K562 (cell line): ENCODE measurements at regions of chr1 and their contacts with region 1.

Region 1: DNA sequence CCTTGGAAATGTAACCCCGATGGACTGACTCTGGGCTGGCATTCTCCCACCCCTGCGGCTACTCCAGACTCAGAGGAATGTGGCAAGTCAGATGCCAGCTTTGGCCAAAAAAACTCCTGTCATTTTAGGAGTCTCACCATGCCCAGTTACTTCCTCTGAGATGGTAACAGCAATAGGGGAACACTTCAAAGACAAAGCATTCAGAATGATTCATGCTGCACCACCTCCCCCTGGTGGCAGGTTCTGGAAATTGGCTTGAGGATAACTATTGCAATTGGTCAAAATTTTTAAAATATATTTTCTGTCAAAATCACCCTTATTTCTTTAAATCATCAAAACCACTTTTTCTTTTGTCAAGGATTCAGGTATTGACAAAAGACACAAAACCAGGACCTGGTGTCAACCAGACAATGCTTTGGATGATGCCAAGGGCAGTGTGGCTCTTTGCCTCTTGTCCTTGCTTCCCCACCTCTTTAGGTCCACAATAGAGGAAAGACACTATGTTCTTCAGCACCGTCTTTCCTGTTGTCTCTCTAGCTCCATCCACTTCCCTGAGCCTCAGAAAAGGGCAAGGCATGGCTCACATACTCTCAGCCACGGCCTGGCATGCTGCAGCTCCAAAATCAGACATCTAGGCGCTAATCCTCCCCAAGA is 9.9 kb upstream of the CDCA8 start:
- DNase-seq: peak; percentile 68 to 80 (median 69)
- ATAC-seq: peak; percentile 88
- H3K4me3 ChIP-seq: no peak overlapping the region
- H3K27ac ChIP-seq: no peak overlapping the region
- H3K4me1 ChIP-seq: no peaks in the 10 kb centered on the region
- H3K27me3 ChIP-seq: peaks cover 4 to 5% of the 10 kb centered on the region in 2 experiments; a peak in 3 of 5 replicates
- CTCF ChIP-seq: peak; percentile 80 to 97 (median 91)
- EP300 ChIP-seq: no peak
- POLR2A ChIP-seq: no peak
- RAD21 ChIP-seq: peak; percentile 85 to 91

Region 2: DNA sequence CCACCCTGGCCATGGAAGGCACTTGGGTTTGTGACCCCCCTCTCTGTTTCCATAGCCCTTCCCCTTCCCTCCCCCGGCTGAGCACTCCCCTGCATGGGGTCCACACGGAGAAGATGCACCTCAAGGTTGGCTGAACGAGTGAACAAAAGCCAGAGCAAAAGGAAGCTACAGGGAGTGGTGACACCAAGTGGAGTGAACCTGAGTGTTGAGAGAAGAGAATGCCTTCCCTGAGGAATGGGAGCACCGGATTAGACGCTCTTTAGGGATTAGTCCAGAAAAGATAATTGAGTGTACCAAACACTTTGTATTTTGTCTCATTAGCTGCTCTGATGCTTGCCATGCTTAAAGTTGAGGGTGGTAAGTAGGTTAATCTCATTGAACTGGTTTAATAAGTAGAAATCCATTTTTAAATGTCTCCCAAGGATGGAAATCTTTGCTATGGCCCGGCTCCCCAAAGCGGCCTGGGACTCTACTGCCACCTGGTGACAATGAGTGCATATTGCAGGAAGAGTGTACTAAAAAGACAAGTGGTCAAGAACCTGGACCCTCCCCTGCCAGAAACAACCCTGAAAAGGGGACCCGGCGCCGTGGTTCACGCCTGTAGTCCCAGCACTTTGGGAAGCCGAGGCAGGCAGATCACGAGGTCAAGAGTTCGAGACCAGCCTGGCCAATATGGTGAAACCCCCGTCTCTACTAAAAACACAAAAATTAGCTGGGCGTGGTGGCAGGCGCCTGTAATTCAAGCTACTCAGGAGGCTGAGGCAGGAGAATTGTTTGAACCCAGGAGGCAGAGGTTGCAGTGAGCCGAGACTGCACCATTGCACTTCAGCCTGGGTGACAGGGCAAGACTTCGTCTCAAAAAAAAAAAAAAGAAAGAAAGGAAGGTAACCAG is 358.7 kb before region 1 on chr1:
- CTCF ChIA-PET with region 1: no interaction called
- POLR2A ChIA-PET with region 1: no interaction called
- in situ Hi-C with region 1: no loop called
- intact Hi-C with region 1: no loop called
- DNase-seq: peak; percentile 67 to 88 (median 86)
- ATAC-seq: peak; percentile 72
- H3K4me3 ChIP-seq: no peak overlapping the region
- H3K27ac ChIP-seq: no peak overlapping the region
- H3K4me1 ChIP-seq: no peaks in the 10 kb centered on the region
- H3K27me3 ChIP-seq: peaks cover 4 to 8% of the 10 kb centered on the region in 2 experiments; a peak in 3 of 5 replicates
- CTCF ChIP-seq: peak; percentile 82 to 87 (median 86)
- EP300 ChIP-seq: no peak
- POLR2A ChIP-seq: no peak
- RAD21 ChIP-seq: peak; percentile 69 to 91

Region 3: DNA sequence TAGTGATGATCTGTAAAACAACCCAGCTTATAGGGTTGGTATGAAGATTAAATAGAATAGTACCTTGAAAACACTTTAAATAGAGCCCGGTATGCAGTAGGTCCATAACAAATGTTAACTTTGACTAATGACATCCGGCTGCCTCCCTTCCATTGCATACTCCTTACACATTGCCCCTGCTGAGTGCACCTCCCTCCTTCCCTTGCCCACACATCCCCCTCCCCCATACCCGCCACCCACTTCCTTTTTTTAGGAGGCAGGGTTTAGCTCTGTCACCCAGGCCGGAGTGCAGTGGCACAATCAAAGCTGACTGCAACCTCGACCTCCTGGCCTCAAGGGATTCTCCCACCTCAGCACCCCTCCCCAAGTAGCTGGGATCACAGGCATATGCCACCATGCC is 232.5 kb before region 1 on chr1:
- CTCF ChIA-PET with region 1: interaction called, 53 read pairs
- POLR2A ChIA-PET with region 1: interaction called, 5 read pairs
- in situ Hi-C with region 1: loop called (anchors 5 kb)
- intact Hi-C with region 1: loop called (anchors 1 kb)
- DNase-seq: no peak
- ATAC-seq: no peak
- H3K4me3 ChIP-seq: no peak overlapping the region
- H3K27ac ChIP-seq: no peak overlapping the region
- H3K4me1 ChIP-seq: peaks cover under 1 to 2% of the 10 kb centered on the region in 2 experiments; a peak in 4 of 5 replicates
- H3K27me3 ChIP-seq: peaks cover 18 to 58% of the 10 kb centered on the region in 2 experiments; a peak in 3 of 5 replicates
- CTCF ChIP-seq: no peak
- EP300 ChIP-seq: no peak
- POLR2A ChIP-seq: no peak
- RAD21 ChIP-seq: no peak

Region 4: GRCh38 chr1:37458528-37458927 is 223.9 kb before region 1 on chr1:
- CTCF ChIA-PET with region 1: interaction called, 53 read pairs
- POLR2A ChIA-PET with region 1: interaction called, 5 read pairs
- in situ Hi-C with region 1: loop called (anchors 5 kb)
- intact Hi-C with region 1: loop called (anchors 1 kb)
- DNase-seq: peak in 1 of 4 experiments; percentile 34
- ATAC-seq: peak; percentile 42
- H3K4me3 ChIP-seq: no peak overlapping the region
- H3K27ac ChIP-seq: no peak overlapping the region
- H3K4me1 ChIP-seq: peaks cover 5 to 7% of the 10 kb centered on the region in 2 experiments; a peak in 4 of 5 replicates
- H3K27me3 ChIP-seq: peaks cover 5 to 16% of the 10 kb centered on the region in 2 experiments; a peak in 4 of 5 replicates
- CTCF ChIP-seq: peak; percentile 23 to 51 (median 43); a peak in 5 of 6 replicates
- EP300 ChIP-seq: no peak
- POLR2A ChIP-seq: no peak
- RAD21 ChIP-seq: peak in 1 of 2 experiments; percentile 47; a peak in 2 of 4 replicates

Region 5: DNA sequence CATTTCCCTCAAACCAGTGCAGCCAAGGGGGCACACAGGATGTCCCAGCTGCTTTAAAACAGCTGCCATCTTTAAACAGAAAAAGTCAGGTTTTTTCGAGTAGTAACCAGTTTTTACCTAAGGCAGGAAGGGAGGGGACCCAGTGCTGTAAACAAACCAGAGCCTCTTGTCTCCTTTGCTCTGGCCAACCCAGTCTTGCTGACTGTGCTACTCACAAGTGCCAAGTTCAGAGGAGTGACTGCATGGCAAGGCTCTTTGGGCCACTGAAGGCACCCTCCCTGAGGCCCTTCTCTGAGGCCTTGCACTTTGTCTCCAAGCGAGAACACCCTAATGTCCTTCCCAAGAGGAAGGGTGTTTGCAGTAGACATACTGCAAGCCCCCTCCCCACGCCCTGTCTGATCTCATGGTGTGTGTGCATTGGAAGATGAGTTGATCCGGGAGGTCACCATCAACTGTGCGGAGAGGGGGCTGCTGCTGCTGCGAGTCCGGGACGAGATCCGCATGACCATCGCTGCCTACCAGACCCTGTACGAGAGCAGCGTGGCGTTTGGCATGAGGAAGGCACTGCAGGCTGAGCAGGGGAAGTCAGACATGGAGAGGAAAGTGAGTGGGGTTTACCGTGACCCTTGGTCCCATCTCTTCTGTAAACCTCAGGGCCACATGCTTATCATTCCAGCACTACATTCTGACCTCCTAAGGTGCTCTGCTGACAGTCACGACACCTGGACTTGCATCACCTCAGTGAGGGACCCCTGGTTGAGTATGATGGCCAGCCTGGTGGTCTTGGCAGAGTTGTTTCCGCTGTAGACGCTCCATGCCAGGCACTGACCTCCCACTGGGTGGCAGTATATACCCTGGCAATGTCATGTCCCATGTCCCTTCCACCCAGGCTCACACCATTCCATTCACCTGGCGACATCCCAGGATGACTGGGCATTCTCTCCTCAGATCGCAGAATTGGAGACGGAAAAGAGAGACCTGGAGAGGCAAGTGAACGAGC is 121.0 kb before region 1 on chr1:
- CTCF ChIA-PET with region 1: interaction called, 3 read pairs
- POLR2A ChIA-PET with region 1: interaction called, 3 read pairs
- in situ Hi-C with region 1: no loop called
- intact Hi-C with region 1: loop called (anchors 5 kb)
- DNase-seq: peak; percentile 56 to 66 (median 61)
- ATAC-seq: peak; percentile 70
- H3K4me3 ChIP-seq: no peak overlapping the region
- H3K27ac ChIP-seq: no peak overlapping the region; the same call in 2 of the 3 replicates
- H3K4me1 ChIP-seq: peaks cover 60 to 61% of the 10 kb centered on the region in 2 experiments
- H3K27me3 ChIP-seq: no peaks in the 10 kb centered on the region
- CTCF ChIP-seq: peak; percentile 68 to 89 (median 76)
- EP300 ChIP-seq: no peak
- POLR2A ChIP-seq: no peak
- RAD21 ChIP-seq: peak; percentile 27 to 72

Region 6: DNA sequence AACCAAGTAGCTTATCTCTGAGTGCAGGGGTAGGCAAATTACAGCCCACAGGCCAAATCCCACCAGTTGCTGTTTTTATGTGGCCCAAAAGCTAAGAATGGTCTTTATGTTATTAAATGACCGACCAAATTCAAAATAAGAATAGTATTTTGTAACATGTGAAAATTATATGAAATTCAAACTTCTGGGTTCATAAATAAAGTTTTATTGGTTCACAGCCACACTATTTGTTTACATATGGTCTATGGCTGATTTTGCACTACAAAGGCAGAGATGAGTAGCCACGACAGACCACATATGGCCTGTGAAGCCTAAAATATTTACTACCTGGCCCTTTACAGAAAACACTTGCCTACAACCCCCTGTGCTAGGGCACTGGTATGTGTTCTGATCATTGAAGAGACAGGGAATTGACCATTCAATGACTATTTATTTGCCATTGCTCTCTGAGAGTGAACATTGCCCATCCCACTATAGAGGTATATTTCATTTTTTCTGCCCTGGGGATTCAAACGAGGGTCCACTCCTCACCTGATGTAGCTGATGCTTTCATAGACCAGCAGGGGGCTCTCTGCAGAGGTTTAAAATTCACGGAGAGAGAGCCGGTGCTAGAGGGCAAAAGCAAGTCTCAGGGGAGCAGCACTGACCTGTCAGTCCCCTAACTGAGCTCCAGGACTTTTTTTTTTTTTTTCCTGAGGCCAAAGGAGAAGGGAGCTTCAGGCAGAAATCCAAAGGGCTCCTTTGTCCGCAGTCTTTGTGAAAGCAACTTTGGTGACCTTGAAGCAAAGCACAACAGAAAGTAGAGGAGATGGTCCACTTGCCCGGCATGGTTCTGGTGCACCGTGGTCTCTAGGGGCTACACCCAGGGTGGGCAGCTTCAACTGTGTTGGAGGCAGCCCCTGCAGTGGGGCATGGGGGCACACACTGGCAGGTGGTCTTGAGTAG is 79.4 kb before region 1 on chr1:
- CTCF ChIA-PET with region 1: interaction called, 12 read pairs
- POLR2A ChIA-PET with region 1: interaction called, 4 read pairs
- in situ Hi-C with region 1: loop called (anchors 5 kb)
- intact Hi-C with region 1: loop called (anchors 2 kb)
- DNase-seq: peak; percentile 68 to 74 (median 70)
- ATAC-seq: peak; percentile 90
- H3K4me3 ChIP-seq: no peak overlapping the region
- H3K27ac ChIP-seq: no peak overlapping the region
- H3K4me1 ChIP-seq: peaks cover 0 to 4% of the 10 kb centered on the region in 2 experiments; a peak in 2 of 5 replicates
- H3K27me3 ChIP-seq: peaks cover 51 to 66% of the 10 kb centered on the region in 2 experiments
- CTCF ChIP-seq: peak; percentile 78 to 86 (median 80)
- EP300 ChIP-seq: no peak
- POLR2A ChIP-seq: no peak
- RAD21 ChIP-seq: peak; percentile 42 to 55